H1 (cell line): ENCODE measurements at regions of chr14 and their contacts with region 1.

Region 1: GRCh38 chr14:33950320-33951182 is at the start of gene EGLN3:
- DNase-seq: peak; percentile 77 to 95
- H3K4me3 ChIP-seq: peak within 1 kb of the TSS; percentile 67 to 83 (median 76)
- H3K27ac ChIP-seq: peak within 1 kb of the TSS; percentile 79
- H3K4me1 ChIP-seq: peaks cover 2 to 14% (median 8%) of the 10 kb centered on the region in 4 experiments; a peak in 6 of 7 replicates
- H3K27me3 ChIP-seq: peaks cover 0 to 11% (median 6%) of the 10 kb centered on the region in 4 experiments; a peak in 4 of 7 replicates
- CTCF ChIP-seq: no peak
- EP300 ChIP-seq: no peak
- POLR2A ChIP-seq: peak; percentile 88 to 99
- RAD21 ChIP-seq: no peak; a peak in 1 of 4 replicates
- total RNA-seq, gene EGLN3: 24.4 and 27.3 TPM in 2 replicates

Region 2: GRCh38 chr14:33938131-33938949 is 12.2 kb before region 1 on chr14:
- CTCF ChIA-PET with region 1: interaction called, 6 read pairs
- POLR2A ChIA-PET with region 1: interaction called, 54 read pairs
- DNase-seq: peak in 1 of 2 experiments; percentile 58
- H3K4me3 ChIP-seq: peak overlapping the region in 3 of 4 experiments; percentile 1 to 47 (median 21); a peak in 5 of 8 replicates
- H3K27ac ChIP-seq: peak overlapping the region; percentile 83
- H3K4me1 ChIP-seq: peaks cover 23 to 50% (median 30%) of the 10 kb centered on the region in 4 experiments
- H3K27me3 ChIP-seq: no peaks in the 10 kb centered on the region
- CTCF ChIP-seq: no peak
- EP300 ChIP-seq: no peak
- POLR2A ChIP-seq: peak in 1 of 2 experiments; percentile 42; a peak in 1 of 3 replicates
- RAD21 ChIP-seq: no peak

Region 3: DNA sequence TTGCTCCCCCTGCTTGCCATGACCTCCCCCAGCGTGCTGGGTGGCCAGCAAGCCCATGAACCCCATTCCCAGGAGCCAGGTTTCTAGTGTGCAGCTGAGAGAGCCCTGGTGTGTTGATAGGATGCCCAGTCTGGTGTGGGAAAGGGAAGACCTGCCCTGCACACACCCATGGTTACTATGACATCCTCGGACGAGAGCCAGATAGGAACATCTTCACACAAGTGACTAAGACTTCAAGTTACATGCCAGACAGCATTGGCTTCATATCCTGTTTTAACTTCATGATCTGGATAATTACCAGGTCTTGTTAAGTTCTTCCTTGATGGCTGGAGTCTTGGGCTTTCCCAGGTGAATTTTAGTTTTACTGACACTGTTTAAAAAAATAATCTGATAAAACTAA is 196.9 kb after region 1 on chr14:
- CTCF ChIA-PET with region 1: no interaction called
- POLR2A ChIA-PET with region 1: no interaction called
- DNase-seq: no peak
- H3K4me3 ChIP-seq: no peak overlapping the region
- H3K27ac ChIP-seq: no peak overlapping the region
- H3K4me1 ChIP-seq: no peaks in the 10 kb centered on the region
- H3K27me3 ChIP-seq: no peaks in the 10 kb centered on the region
- CTCF ChIP-seq: no peak
- EP300 ChIP-seq: no peak
- POLR2A ChIP-seq: no peak
- RAD21 ChIP-seq: no peak